Endothelial cell of umbilical vein (primary cell): ENCODE measurements at regions of chr1 and their contacts with region 1.

Region 1: GRCh38 chr1:159891275-159892157 is 8.4 kb downstream of the CFAP45 start:
- DNase-seq: peak; percentile 95
- H3K4me3 ChIP-seq: no peak overlapping the region
- H3K27ac ChIP-seq: peak overlapping the region; percentile 27
- H3K4me1 ChIP-seq: peaks cover 21% of the 10 kb centered on the region
- H3K27me3 ChIP-seq: no peaks in the 10 kb centered on the region
- CTCF ChIP-seq: peak; percentile 97 to 99
- POLR2A ChIP-seq: no peak

Region 2: DNA sequence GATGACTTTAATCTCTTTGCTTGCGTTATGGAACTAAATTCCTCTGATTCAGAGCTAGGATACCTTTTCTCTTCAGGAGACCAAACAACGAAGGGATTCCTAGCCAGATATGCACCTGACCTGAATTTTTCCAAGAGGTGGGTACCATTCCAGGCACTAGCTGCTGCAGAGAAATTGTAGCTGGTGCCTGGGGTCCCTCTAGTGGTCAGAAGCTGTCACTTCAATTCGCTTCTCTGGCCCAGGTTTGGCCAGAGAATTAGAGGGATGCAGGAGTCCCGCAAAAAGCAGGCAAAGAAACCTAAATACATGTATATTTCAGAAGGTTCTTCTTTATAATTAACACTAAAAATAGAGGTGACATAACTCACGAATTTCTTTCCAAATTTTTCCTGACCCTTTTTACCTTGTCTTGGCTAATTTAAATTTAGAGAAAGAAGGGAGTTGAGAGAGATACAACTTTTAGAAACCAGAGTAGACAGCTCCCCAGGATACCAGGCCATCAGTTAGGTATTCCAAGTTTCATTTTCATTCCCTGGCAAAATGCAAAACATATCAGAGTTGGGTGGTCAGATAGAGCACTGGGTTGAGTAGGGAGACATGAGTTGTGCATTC is 677.3 kb before region 1 on chr1:
- CTCF ChIA-PET with region 1: interaction called, 12 read pairs
- POLR2A ChIA-PET with region 1: no interaction called
- dilution Hi-C with region 1: no loop called
- intact Hi-C with region 1: loop called (anchors 2 kb)
- DNase-seq: peak; percentile 49
- H3K4me3 ChIP-seq: no peak overlapping the region
- H3K27ac ChIP-seq: no peak overlapping the region
- H3K4me1 ChIP-seq: peaks cover 12% of the 10 kb centered on the region
- H3K27me3 ChIP-seq: no peaks in the 10 kb centered on the region
- CTCF ChIP-seq: peak; percentile 84 to 85
- POLR2A ChIP-seq: no peak

Region 3: GRCh38 chr1:159775716-159776115 is 115.8 kb before region 1 on chr1:
- CTCF ChIA-PET with region 1: interaction called, 66 read pairs
- POLR2A ChIA-PET with region 1: no interaction called
- dilution Hi-C with region 1: no loop called
- intact Hi-C with region 1: loop called (anchors 1 kb)
- DNase-seq: peak; percentile 46
- H3K4me3 ChIP-seq: no peak overlapping the region
- H3K27ac ChIP-seq: peak overlapping the region; percentile 9
- H3K4me1 ChIP-seq: peaks cover 53% of the 10 kb centered on the region
- H3K27me3 ChIP-seq: no peaks in the 10 kb centered on the region
- CTCF ChIP-seq: no peak
- POLR2A ChIP-seq: peak; percentile 49

Region 4: GRCh38 chr1:159817276-159818041 is 74.1 kb before region 1 on chr1:
- CTCF ChIA-PET with region 1: interaction called, 13 read pairs
- POLR2A ChIA-PET with region 1: no interaction called
- dilution Hi-C with region 1: no loop called
- intact Hi-C with region 1: no loop called
- DNase-seq: peak; percentile 34
- H3K4me3 ChIP-seq: no peak overlapping the region
- H3K27ac ChIP-seq: no peak overlapping the region
- H3K4me1 ChIP-seq: peaks cover 3% of the 10 kb centered on the region
- H3K27me3 ChIP-seq: peaks cover 15 to 32% of the 10 kb centered on the region in 2 experiments
- CTCF ChIP-seq: no peak
- POLR2A ChIP-seq: no peak

Region 5: GRCh38 chr1:159916184-159917051 is 24.9 kb after region 1 on chr1:
- CTCF ChIA-PET with region 1: interaction called, 71 read pairs
- POLR2A ChIA-PET with region 1: no interaction called
- dilution Hi-C with region 1: no loop called
- intact Hi-C with region 1: no loop called
- DNase-seq: peak; percentile 91
- H3K4me3 ChIP-seq: no peak overlapping the region
- H3K27ac ChIP-seq: peak overlapping the region; percentile 91
- H3K4me1 ChIP-seq: peaks cover 25% of the 10 kb centered on the region
- H3K27me3 ChIP-seq: no peaks in the 10 kb centered on the region
- CTCF ChIP-seq: no peak
- POLR2A ChIP-seq: no peak